ENCODE measurements at regions of chr7 and their contacts with region 1.

Region 1: DNA sequence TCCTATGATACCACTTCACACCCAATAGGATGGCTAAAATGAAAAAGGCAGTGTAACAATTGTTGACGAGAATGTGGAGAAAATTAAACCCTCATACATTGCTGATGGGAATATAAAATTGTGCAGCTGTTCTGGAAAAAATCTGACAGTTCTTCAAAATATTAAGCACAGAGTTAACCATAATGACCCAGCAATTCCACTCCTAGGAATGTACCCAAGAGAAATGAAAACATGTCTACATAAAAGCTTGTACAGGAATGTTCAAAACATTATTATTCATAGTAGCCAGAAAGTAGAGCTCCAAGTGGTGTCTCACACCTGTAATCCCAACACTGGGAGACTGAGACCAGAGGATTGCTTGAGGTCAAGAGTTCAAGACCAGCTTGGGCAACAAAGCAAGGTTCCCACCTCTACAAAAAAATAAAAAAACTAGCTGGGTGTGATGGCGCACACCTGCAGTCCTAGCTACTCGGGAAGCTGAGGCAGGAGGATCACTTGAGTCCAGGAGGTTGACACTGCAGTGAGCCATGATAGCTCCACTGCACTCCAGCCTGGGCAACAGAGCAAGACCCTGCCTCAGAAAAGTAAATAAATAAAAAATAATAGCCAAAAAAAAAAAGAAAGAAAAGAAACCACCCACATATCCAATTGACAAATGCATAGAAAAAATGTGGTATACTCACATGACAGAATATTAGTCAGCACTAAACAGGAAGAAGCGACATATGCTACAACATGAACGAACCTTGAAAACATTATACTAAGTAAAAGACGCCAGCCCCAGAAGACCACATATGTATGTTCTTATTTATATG is 5.0 kb downstream of the RHEB start:
- DNase-seq: no peak
- H3K4me3 ChIP-seq: no peak overlapping the region
- H3K27ac ChIP-seq: no peak overlapping the region
- H3K4me1 ChIP-seq: peaks cover 15% of the 10 kb centered on the region
- H3K27me3 ChIP-seq: no peaks in the 10 kb centered on the region
- CTCF ChIP-seq: no peak

Region 2: DNA sequence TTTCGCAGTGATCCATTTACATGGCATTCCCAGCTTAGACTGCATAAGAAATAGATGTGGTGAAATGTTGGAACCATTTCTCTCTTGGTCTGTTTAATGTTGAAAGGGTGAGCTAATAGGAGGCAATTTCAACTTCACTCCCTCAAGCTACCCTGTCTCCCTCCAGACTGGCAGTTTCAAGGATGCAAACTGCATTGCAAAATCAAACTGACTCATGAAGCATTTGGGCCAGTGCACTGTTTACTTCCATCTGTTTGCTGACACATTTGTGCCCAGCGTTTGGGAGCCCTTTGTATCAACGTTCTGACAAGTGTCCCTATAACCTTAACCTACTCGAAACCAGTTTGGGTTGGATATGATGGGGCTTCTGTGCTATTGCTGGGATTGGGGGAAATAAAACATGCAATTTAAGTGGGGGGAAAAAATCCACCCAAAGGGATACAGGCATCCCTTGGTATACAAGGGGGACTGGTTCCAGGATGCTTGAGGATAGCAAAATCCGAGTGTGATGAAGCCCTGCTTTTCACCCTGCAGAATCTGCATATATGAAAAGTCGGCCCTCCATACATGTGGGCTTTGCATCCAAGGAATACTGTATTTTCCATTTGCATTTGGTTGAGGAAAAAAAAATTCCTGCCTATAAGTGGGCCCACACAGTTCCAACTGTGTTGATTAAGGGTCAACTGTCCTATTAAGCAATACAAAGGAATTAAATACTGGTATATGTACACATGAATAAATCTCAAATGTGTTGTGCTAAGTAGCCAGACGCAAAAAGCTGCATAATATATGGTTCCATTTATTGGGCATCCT is 10.6 kb before region 1 on chr7:
- CTCF ChIA-PET with region 1: no interaction called
- dilution Hi-C with region 1: no loop called
- in situ Hi-C with region 1: no loop called
- intact Hi-C with region 1: loop called (anchors 1 kb)
- DNase-seq: peak; percentile 77
- H3K4me3 ChIP-seq: no peak overlapping the region
- H3K27ac ChIP-seq: no peak overlapping the region
- H3K4me1 ChIP-seq: peaks cover 22% of the 10 kb centered on the region
- H3K27me3 ChIP-seq: no peaks in the 10 kb centered on the region
- CTCF ChIP-seq: no peak

Region 3: DNA sequence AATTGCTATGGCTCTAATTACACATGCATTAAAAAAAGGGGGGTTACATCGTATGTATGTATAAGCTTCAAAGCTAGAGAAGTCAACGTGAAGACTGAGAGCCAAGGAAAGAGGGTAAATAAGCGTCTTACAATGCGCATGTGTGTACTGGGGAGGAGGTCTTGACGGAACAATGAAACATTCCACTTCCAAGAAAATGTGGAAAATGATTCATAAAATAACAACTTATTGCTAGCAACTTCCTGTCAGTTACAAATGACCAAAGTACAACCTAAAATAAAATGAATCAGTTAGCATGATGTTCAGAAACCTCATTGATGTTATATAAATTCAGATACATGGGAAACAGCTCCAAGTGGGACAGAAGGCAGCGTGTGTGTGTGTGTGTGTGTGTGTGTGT is 109.1 kb after region 1 on chr7:
- CTCF ChIA-PET with region 1: no interaction called
- dilution Hi-C with region 1: no loop called
- in situ Hi-C with region 1: no loop called
- intact Hi-C with region 1: no loop called
- DNase-seq: no peak
- H3K4me3 ChIP-seq: no peak overlapping the region
- H3K27ac ChIP-seq: no peak overlapping the region
- H3K4me1 ChIP-seq: peaks cover 15% of the 10 kb centered on the region
- H3K27me3 ChIP-seq: no peaks in the 10 kb centered on the region
- CTCF ChIP-seq: no peak

Measured in mammary epithelial cell (primary cell).